Activated CD4-positive, alpha-beta memory T cell treated with anti-CD3 and anti-CD28 coated beads, Interleukin-2, amount 10 ng/mL, durations not matched to agents 7 days and 5 days (primary cell): ENCODE measurements at regions of chr2 and their contacts with region 1.

Region 1: DNA sequence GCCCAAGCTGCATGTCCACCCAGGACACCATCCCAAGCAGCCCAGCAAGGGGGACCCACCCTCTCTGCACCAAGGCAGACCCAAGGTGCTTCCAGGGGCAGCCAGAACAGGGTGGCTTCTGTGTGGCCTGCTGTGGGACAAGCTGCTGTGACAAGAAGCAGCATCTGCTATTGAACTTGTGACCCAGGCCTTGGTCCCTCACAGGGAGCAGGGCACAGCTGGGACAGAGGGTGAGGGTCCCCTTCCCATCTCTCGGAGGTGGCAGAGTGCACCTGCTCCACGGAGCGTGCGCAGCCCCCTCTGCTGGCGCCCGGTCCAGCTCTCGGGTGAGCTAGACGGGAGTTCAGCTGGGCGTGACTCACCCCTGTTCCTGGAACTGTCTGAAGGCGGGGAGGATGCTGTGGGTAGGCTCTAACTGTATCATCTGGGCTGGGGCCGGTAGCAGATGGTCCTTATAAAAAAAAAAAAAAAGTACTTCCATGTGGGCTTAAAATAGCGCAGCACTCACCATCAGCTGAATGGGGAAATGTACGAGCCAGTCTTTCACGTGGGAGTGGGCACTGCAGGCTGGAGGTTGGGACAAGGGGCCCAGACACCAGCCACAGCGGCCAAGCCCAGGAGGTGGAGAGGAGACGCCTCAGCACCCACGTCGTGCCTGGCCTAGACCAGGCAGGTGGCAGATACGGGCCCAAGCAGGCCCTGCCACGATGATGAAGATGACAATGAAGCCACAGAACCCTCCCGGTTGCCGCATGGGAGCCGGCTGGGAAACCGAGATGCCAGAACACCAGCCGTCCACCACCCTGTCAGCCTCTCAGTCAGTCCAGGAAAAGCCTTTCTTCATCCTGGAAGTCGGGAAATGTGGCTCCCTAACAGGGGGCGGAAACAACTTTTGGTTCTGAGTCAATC is 136.8 kb upstream of the ID2 start:
- DNase-seq: peak; percentile 93
- H3K4me3 Mint-ChIP-seq: peak overlapping the region; percentile 39
- H3K27ac Mint-ChIP-seq: peak overlapping the region; percentile 100
- H3K4me1 Mint-ChIP-seq: peaks cover 81% of the 10 kb centered on the region
- H3K27me3 Mint-ChIP-seq: no peaks in the 10 kb centered on the region

Region 2: DNA sequence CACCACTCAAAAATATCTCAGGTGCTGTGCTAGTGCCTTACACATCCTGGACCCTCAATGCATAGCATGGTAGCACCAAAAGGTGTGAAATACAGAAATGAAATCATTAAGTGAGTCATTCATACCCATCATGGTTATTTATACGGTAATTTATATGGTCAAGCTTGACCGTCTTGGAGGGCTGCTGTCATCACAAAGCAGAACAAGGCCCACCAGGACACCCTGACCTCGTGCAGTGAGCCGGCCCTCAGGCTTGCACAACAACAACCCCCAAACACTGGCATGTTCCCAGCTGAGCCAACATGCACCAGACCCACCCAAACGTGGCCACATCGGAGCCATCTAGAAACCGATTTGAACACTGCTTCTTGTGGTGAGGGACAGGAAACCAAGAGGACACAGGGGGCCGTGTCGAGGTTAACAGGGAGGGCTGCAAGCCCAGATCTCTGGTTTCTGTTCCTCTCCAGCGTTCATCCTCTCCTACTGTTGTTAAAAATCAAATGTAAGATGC is 241.7 kb before region 1 on chr2:
- CTCF ChIA-PET with region 1: interaction called, 4 read pairs
- POLR2A ChIA-PET with region 1: interaction called, 11 read pairs
- DNase-seq: peak; percentile 88
- H3K4me3 Mint-ChIP-seq: peak overlapping the region; percentile 44
- H3K27ac Mint-ChIP-seq: peak overlapping the region; percentile 91
- H3K4me1 Mint-ChIP-seq: peaks cover 88% of the 10 kb centered on the region
- H3K27me3 Mint-ChIP-seq: no peaks in the 10 kb centered on the region

Region 3: DNA sequence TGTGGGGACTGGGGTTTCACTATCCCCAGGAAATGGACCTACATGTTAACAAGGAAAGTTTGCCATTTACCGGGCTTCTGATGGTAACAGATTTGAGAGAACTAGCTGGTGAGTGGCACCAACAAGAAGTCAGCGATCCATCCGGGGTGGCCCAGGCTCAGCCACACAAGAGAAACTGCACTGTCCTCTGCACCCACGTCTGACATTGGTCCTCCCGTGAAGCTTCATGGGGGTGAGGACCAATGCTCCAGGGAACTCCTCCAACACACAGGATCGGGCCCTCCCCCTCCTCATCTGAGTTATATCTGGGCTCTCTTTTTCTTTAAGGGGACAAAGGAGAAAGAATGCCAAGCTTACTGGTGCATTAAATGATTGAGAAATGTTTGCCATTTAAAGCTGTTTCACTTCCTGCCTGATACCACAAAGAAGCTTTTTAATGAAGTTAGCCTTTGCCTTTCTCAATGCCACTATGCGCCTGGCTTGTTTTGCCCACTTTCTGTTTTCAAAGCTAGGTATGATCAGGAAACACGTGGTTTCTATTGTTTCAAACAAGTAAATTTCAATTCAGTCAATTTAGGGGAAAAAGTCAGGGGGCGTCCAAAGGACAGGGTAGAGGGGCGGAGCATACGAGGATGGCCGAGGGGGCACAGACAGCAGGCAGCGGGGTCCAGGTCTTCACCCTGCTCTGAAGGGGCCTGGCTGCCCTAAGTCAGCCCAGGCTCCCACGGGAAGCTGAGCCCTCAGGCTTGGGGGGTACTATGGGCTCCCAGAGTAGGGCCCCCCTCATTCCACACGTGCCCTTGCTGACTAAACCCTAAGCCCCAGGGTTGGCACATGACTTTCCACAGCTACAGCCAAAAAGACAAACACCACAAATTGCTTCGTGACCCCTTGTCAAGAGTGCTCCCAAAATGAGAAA is 67.2 kb before region 1 on chr2:
- CTCF ChIA-PET with region 1: interaction called, 21 read pairs
- POLR2A ChIA-PET with region 1: interaction called, 52 read pairs
- DNase-seq: peak; percentile 56
- H3K4me3 Mint-ChIP-seq: peak overlapping the region; percentile 58
- H3K27ac Mint-ChIP-seq: peak overlapping the region; percentile 96
- H3K4me1 Mint-ChIP-seq: peaks cover 93% of the 10 kb centered on the region
- H3K27me3 Mint-ChIP-seq: no peaks in the 10 kb centered on the region

Region 4: DNA sequence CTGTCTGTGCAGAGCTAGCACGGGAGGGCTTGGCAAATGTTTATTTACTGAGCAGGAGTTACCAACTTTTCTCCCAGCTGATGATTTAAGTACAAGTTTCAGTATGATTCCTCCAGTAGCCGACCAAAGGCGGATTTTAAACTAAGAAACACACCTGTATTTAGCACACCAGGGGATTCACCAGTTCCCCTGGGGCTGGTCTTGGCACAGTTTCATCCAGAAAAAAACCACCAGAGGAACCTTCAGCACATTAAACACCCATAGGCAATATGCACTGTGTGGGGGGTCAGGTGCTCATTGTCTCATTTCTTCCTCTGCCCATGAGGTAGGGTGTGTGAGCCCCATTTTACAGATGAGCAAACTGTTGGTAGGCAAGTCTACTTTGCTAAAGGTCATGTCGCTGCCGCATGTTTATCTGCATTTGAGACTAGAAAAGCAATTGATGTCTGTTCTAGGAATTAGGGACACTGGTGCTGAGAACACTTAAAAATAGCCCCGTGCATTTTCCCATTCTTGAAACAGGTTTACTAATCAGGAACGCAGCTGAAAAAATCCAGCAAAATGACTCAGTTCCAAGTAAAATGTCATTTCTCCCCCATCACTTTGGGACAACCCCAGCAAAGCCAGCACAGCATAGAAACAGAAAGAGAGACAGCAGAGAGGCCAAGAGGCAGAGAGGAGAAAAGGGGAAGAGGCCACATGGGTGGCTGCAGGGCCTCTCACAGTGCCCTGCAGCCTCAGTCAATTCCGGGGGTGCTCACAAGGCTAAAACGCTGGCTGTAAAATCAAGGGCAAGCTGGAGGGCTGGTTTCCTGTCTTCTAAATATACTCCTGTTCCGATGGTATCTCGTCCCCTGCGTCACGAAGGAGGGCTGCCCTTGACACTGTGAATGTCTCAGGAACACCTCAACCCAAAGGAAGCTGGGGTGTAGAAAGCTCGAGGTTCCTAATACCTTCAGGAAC is 30.0 kb before region 1 on chr2:
- CTCF ChIA-PET with region 1: interaction called, 12 read pairs
- POLR2A ChIA-PET with region 1: interaction called, 57 read pairs
- DNase-seq: peak; percentile 77
- H3K4me3 Mint-ChIP-seq: peak overlapping the region; percentile 41
- H3K27ac Mint-ChIP-seq: peak overlapping the region; percentile 89
- H3K4me1 Mint-ChIP-seq: peaks cover 73% of the 10 kb centered on the region
- H3K27me3 Mint-ChIP-seq: no peaks in the 10 kb centered on the region

Region 5: DNA sequence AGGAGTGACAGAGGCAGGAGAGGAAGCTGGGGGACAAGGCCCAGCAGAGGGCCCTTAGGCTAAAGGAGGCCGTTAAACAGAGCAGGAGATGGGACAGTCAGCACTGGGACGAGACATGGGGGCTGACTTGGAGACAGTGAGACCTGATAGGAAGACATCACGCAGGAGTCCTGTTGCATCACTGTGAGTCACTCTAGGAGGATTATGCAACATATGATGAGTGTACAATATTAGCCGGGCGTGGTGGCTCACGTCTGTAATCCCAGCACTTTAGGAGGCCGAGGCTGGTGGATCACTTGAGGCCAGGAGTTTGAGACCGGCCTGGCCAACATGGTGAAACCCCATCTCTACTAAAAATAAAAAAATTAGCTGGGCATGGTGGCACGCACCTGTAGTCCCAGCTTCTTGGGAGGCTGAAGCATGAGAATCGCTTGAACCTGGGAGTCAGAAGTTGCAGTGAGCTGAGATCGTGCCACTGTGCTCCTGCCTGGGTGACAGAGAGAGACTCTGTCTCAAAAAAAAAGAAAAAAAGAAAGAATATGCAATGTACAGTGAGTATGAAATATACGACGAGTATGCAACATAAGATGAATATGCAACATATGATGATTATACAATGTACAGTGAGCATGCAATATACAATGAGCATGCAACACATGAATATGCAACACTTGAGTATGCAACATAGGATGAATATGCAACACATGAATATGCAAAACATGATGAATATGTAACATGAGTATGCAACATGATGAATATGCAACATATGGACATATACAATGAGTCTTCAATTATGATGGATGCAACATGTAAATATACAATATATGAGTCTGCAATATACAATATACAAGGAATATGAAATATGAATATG is 53.5 kb after region 1 on chr2:
- CTCF ChIA-PET with region 1: no interaction called
- POLR2A ChIA-PET with region 1: no interaction called
- DNase-seq: no peak
- H3K4me3 Mint-ChIP-seq: no peak overlapping the region
- H3K27ac Mint-ChIP-seq: no peak overlapping the region
- H3K4me1 Mint-ChIP-seq: peaks cover 12% of the 10 kb centered on the region
- H3K27me3 Mint-ChIP-seq: peaks cover 8% of the 10 kb centered on the region